Body of pancreas (tissue), 4 donors: ENCODE measurements at regions of chr12 and their contacts with region 1.

Region 1: GRCh38 chr12:98373025-98373554 is 142.3 kb upstream of the TMPO start:
- DNase-seq: peak in 1 of 4 donors; percentile 3
- ATAC-seq: no peak
- H3K4me3 ChIP-seq: no peak overlapping the region
- H3K27ac ChIP-seq: no peak overlapping the region
- H3K4me1 ChIP-seq: peaks cover 9% of the 10 kb centered on the region
- H3K27me3 ChIP-seq: no peaks in the 10 kb centered on the region
- CTCF ChIP-seq: peak; percentile 13 to 66 (median 58)
- POLR2A ChIP-seq: no peak

Region 2: GRCh38 chr12:97148941-97149559 is 1224.0 kb before region 1 on chr12:
- intact Hi-C with region 1: loop called (anchors 10 kb)
- DNase-seq: peak; percentile 77 to 83 (median 78)
- ATAC-seq: peak; percentile 97
- H3K4me3 ChIP-seq: no peak overlapping the region
- H3K27ac ChIP-seq: no peak overlapping the region
- H3K4me1 ChIP-seq: no peaks in the 10 kb centered on the region
- H3K27me3 ChIP-seq: no peaks in the 10 kb centered on the region
- CTCF ChIP-seq: peak; percentile 63 to 78 (median 75)
- POLR2A ChIP-seq: no peak

Region 3: DNA sequence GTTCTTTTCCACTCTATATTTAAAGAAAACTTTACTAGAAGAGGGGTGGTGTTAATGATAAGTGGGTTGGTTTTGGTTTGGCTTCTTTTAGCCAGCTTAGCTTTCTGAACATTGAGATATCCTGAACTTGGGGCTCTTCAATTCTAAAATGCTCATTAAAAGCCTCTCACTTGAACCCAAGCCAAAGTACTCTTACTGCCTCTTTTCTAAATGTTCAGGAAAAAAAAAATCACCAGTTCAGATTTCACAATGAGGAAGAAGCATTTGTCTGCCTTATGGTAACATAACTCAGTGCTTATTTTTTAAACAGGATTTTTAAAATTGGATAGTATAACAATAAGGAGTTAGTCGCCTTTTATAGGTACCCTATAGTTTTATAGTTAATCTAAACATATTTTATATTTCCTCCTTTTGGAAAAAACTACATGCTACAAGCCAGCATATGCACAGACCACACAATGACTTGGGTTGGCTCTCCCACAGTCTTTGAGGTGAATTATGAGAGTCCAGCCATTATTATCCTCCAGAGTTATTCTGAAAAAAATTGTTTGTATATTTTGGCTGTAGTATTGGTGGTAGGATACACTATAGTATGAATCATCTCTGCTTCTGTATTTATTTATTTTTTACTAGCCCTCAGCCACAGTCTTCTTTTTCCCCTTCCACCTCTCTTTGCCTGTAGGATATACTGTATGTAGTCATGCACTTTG is 53.2 kb before region 1 on chr12:
- intact Hi-C with region 1: no loop called
- DNase-seq: no peak
- ATAC-seq: no peak
- H3K4me3 ChIP-seq: no peak overlapping the region
- H3K27ac ChIP-seq: no peak overlapping the region
- H3K4me1 ChIP-seq: no peaks in the 10 kb centered on the region
- H3K27me3 ChIP-seq: no peaks in the 10 kb centered on the region
- CTCF ChIP-seq: no peak
- POLR2A ChIP-seq: no peak